ENCODE measurements at regions of chr2 and their contacts with region 1.

Region 1: GRCh38 chr2:42974721-42975717 is 182.6 kb upstream of the HAAO start:
- DNase-seq: peak; percentile 13 to 71 (median 46)
- ATAC-seq: peak; percentile 46
- H3K4me3 ChIP-seq: no peak overlapping the region
- H3K4me3 Mint-ChIP-seq: no peak overlapping the region
- H3K27ac ChIP-seq: no peak overlapping the region
- H3K27ac Mint-ChIP-seq: no peak overlapping the region
- H3K4me1 ChIP-seq: peaks cover 9% of the 10 kb centered on the region
- H3K4me1 Mint-ChIP-seq: peaks cover 9% of the 10 kb centered on the region
- H3K27me3 ChIP-seq: no peaks in the 10 kb centered on the region
- H3K27me3 Mint-ChIP-seq: no peaks in the 10 kb centered on the region
- CTCF ChIP-seq: peak; percentile 64

Region 2: DNA sequence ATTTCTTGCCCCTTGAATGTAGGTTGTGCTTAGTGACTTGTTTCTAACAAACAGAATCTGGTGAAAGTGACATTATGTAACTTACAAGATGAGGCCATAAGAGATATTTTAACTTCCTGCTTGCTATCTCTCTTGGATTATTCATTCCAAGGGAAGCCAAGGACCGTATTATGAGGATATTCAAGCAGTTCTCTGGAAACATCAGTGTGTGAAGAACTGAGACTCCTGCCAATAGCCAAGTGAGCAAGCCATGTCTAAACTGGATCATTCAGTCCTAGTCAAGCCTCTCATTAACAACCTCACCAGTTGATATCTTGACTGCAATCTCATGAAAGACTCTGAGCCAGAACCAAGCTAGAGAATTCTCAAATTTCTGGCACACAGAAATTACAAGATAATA is 1758.0 kb before region 1 on chr2:
- CTCF ChIA-PET with region 1: no interaction called
- POLR2A ChIA-PET with region 1: no interaction called
- intact Hi-C with region 1: no loop called
- DNase-seq: no peak
- ATAC-seq: no peak
- H3K4me3 ChIP-seq: no peak overlapping the region
- H3K4me3 Mint-ChIP-seq: no peak overlapping the region
- H3K27ac ChIP-seq: no peak overlapping the region
- H3K27ac Mint-ChIP-seq: no peak overlapping the region
- H3K4me1 ChIP-seq: no peaks in the 10 kb centered on the region
- H3K4me1 Mint-ChIP-seq: no peaks in the 10 kb centered on the region
- H3K27me3 ChIP-seq: no peaks in the 10 kb centered on the region
- H3K27me3 Mint-ChIP-seq: no peaks in the 10 kb centered on the region
- CTCF ChIP-seq: no peak

Region 3: DNA sequence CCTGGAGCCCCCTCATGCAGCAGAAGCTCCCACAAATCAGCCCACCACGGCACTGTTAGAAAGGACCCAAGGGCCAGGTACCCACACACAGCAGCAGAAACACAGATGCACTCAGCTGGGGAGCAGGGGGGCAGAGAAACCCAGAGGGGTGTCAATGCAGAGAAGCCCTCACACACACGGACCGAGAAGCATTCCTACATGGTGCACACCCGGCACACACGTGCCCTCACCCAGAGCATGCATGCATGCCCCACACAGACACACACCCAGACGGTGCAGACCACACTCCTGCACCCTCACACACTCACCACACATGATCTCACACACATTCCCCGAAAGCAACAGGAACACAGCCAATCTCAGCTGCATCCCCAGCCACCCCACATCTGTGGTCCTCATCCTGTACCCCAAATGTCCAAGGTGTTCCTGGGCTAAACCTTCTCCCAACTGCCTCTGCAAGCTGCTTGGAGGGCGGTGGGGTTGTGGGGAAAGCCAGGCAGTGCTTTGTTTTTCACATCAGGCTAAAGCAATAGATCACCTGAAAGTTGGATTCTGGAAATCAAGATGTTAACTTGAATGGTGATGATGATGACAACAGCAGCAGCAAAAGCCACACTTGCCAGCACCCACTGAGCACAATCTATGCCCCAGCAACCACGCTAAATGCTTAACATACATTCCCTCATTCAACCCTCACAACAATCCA is 149.1 kb after region 1 on chr2:
- CTCF ChIA-PET with region 1: interaction called, 4 read pairs
- POLR2A ChIA-PET with region 1: no interaction called
- intact Hi-C with region 1: loop called (anchors 2 to 10 kb)
- DNase-seq: no peak
- ATAC-seq: peak; percentile 52
- H3K4me3 ChIP-seq: no peak overlapping the region
- H3K4me3 Mint-ChIP-seq: peak overlapping the region; percentile 31
- H3K27ac ChIP-seq: no peak overlapping the region
- H3K27ac Mint-ChIP-seq: peak overlapping the region; percentile 80
- H3K4me1 ChIP-seq: peaks cover 42% of the 10 kb centered on the region
- H3K4me1 Mint-ChIP-seq: peaks cover 55% of the 10 kb centered on the region
- H3K27me3 ChIP-seq: no peaks in the 10 kb centered on the region
- H3K27me3 Mint-ChIP-seq: no peaks in the 10 kb centered on the region
- CTCF ChIP-seq: no peak

Measured in CD4-positive, alpha-beta T cell (primary cell).